RWPE1 (cell line): ENCODE measurements at regions of chr5 and their contacts with region 1.

Region 1: DNA sequence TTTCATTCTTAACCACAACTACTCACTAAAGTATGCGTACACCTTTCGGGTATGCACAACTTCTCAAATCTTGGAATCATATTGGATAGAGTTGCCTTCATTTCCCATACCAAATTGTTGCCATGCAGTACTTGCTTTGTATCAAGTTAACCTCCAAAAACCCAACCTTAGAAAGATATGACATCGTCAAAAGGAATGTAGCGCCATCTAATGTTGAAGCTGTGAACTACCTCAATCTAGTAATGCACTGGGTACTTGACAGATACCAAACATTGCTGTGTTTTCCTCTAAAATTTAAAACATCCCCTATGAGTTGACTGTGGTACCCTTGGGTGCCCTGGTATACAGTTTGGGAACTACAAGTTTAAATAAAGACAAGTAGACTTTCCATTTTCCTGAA is 318.4 kb downstream of the ARL15 start:
- DNase-seq: no peak
- H3K27ac ChIP-seq: no peak overlapping the region
- CTCF ChIP-seq: no peak

Region 2: DNA sequence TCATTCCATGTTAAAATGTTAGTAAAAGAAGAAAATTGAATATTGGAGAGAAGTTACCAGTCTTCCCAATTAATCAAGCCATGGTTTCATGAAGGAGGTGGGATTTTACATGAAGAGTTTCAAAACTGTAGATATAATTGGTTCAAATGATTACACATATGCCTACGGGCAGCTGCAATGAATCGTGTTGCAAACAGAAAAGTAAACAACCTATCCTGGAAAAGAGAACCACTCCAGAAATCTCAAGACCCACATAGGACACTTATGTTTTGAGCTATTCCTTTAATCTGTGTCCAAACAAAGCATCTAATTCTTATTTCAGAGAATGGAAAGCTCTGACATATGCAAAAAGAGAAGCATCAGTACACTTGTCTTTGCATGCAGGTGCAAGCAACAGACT is 91.3 kb before region 1 on chr5:
- CTCF ChIA-PET with region 1: no interaction called
- POLR2A ChIA-PET with region 1: no interaction called
- DNase-seq: no peak
- H3K27ac ChIP-seq: no peak overlapping the region
- CTCF ChIP-seq: no peak

Region 3: GRCh38 chr5:54133917-54134316 is 142.0 kb after region 1 on chr5:
- CTCF ChIA-PET with region 1: interaction called, 11 read pairs
- POLR2A ChIA-PET with region 1: no interaction called
- DNase-seq: no peak
- H3K27ac ChIP-seq: no peak overlapping the region
- CTCF ChIP-seq: no peak